CD4-positive, alpha-beta memory T cell (primary cell): ENCODE measurements at regions of chr19 and their contacts with region 1.

Region 1: DNA sequence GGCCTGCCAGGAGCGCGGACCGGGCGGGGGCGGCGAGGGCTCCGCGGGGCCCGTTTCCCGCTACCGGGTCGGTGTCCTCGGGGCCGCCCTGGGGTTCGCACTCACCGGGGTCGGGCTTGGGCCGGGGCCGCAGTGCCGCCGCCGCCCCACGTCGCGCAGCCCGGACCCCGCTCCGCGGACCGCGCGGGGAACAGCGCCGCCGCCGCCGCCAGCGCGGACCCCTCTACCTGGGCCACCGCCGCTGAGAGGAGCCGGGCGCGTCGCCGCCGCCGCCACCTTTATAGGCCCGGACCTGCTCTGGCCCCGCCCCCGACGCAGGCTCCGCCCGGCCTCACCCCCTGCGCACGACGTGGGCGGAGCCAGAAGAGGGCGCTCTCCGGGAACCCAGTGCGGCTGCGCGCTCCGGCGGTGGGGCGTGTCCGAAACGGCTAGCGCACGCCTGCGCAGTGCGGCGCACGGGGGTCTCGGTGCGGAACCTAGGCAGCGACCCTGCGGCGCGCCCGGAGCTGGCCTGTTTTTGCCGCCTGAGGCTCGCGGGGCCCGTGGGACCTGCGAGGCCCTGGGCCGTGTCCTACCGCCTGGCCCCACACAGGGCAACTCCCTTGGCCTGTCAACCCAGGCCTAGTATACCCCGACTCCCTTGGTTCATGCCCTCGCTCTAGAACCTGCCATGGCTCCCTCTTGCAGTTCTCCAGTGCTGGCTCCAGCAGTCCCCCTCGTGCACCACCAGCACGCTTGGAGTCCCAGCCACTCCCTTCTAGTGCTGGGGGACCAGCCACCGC is at the start of gene MKNK2:
- DNase-seq: peak; percentile 86 to 97 (median 93)
- H3K4me3 ChIP-seq: peak within 1 kb of the TSS; percentile 84 to 89
- H3K4me3 Mint-ChIP-seq: peak within 1 kb of the TSS; percentile 88 to 91 (median 88)
- H3K27ac ChIP-seq: peak within 1 kb of the TSS; percentile 89
- H3K27ac Mint-ChIP-seq: peak within 1 kb of the TSS; percentile 95 to 98 (median 96)
- H3K4me1 ChIP-seq: peaks cover 61% of the 10 kb centered on the region
- H3K4me1 Mint-ChIP-seq: peaks cover 15 to 68% (median 42%) of the 10 kb centered on the region in 4 donors
- H3K27me3 ChIP-seq: no peaks in the 10 kb centered on the region
- H3K27me3 Mint-ChIP-seq: no peaks in the 10 kb centered on the region
- total RNA-seq, gene MKNK2: 194 to 195 TPM

Region 2: DNA sequence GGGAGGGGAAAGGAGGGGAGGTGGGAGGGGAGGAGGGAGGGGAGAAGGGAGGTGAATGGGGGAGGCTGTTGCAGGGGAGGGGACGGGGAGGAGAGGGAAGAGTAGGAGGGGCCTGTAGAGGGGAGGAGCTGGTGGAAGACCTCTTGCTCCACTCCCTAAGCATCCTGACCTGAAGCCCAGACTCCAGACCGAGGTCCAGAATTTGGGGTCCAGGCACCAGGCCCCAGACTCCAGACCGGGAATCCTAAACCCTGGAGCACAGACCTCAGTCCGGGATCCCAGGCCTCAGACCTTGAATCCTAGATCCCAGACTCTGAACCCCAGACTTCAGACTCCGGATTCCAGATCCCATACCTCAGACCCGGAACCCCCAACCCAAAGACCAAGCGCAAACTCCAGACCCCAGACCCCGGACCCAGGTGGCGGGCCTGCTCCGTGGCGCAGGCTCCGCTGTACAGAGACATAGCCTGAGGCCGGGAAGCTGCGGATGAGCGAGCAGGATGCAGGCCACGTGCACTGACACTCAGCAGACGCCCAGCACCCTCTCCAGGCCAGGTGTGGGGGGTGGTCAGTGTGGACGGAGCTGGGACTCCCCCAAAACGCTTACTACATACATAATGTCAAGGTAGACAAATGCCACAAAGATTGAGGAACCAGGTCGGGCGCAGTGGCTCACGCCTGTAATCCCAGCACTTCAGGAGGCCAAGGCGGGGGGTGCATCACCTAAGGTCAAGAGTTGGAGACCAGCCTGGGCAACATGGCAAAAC is 35.0 kb before region 1 on chr19:
- CTCF ChIA-PET with region 1: interaction called, 3 read pairs
- POLR2A ChIA-PET with region 1: interaction called, 8 read pairs
- intact Hi-C with region 1: loop called (anchors 1 kb)
- DNase-seq: peak; percentile 43 to 78 (median 55)
- H3K4me3 ChIP-seq: no peak overlapping the region
- H3K4me3 Mint-ChIP-seq: peak overlapping the region; percentile 43 to 65 (median 60)
- H3K27ac ChIP-seq: peak overlapping the region; percentile 18
- H3K27ac Mint-ChIP-seq: peak overlapping the region in 6 of 7 donors; percentile 36 to 91 (median 64)
- H3K4me1 ChIP-seq: peaks cover 16% of the 10 kb centered on the region
- H3K4me1 Mint-ChIP-seq: peaks cover 7 to 25% (median 16%) of the 10 kb centered on the region in 4 donors
- H3K27me3 ChIP-seq: no peaks in the 10 kb centered on the region
- H3K27me3 Mint-ChIP-seq: no peaks in the 10 kb centered on the region

Region 3: GRCh38 chr19:2061495-2062381 is 10.6 kb after region 1 on chr19:
- CTCF ChIA-PET with region 1: interaction called, 9 read pairs
- POLR2A ChIA-PET with region 1: interaction called, 88 read pairs
- intact Hi-C with region 1: loop called (anchors 1 kb)
- DNase-seq: peak; percentile 98 to 100 (median 100)
- H3K4me3 ChIP-seq: peak overlapping the region; percentile 87
- H3K4me3 Mint-ChIP-seq: peak overlapping the region; percentile 85 to 98 (median 92)
- H3K27ac ChIP-seq: peak overlapping the region; percentile 97
- H3K27ac Mint-ChIP-seq: peak overlapping the region; percentile 93 to 99 (median 97)
- H3K4me1 ChIP-seq: peaks cover 54% of the 10 kb centered on the region
- H3K4me1 Mint-ChIP-seq: peaks cover 12 to 53% (median 32%) of the 10 kb centered on the region in 4 donors
- H3K27me3 ChIP-seq: no peaks in the 10 kb centered on the region
- H3K27me3 Mint-ChIP-seq: no peaks in the 10 kb centered on the region

Region 4: GRCh38 chr19:2084993-2085720 is 34.0 kb after region 1 on chr19:
- CTCF ChIA-PET with region 1: interaction called, 7 read pairs
- POLR2A ChIA-PET with region 1: interaction called, 75 read pairs
- intact Hi-C with region 1: loop called (anchors 1 kb)
- DNase-seq: peak; percentile 96 to 97 (median 97)
- H3K4me3 ChIP-seq: peak overlapping the region; percentile 80 to 97
- H3K4me3 Mint-ChIP-seq: peak overlapping the region; percentile 97 to 100 (median 99)
- H3K27ac ChIP-seq: peak overlapping the region; percentile 93
- H3K27ac Mint-ChIP-seq: peak overlapping the region; percentile 97 to 100 (median 99)
- H3K4me1 ChIP-seq: peaks cover 75% of the 10 kb centered on the region
- H3K4me1 Mint-ChIP-seq: peaks cover 45 to 85% (median 66%) of the 10 kb centered on the region in 4 donors
- H3K27me3 ChIP-seq: no peaks in the 10 kb centered on the region
- H3K27me3 Mint-ChIP-seq: peaks cover 0 to 2% of the 10 kb centered on the region in 2 donors